ENCODE measurements at regions of chr3 and their contacts with region 1.

Region 1: DNA sequence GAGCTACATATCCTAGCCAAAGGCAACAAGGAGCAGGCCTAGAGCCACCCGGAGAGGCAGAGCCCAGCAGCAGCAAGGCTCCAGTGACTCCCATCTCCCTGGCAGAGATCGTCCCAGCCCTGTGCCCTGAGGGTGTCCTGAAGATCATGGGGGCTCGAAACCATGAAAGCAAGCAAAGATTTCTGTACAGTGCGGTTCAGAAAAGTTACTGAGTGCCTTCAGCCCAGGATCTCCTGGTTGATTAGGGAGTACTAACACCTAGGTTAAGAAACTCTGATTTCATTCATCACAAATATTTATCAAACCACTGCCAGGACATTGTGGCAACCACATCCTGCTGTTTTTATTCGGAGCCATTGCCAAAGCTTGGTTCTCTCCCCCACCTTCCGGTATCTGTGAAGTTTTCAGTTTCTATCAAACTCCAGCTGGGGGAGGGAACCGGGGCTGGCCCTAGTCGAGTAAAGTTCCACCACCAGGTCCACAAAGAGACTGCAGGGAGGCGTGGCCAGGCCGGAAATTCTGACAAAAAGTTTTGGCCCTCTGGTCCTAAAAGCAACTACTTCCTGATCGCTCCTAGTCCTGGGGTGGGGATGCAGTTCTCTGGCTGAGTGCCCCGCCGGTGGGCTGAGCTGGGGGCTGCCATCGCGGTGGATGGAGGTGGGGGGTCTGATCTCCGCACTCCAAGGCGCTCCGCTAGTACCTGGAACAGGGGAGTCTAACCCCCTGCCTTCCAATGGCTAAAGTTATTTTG is 1.2 kb downstream of the RAB43 start:
- H3K4me3 Mint-ChIP-seq: peak overlapping the region; percentile 88
- H3K27ac Mint-ChIP-seq: peak overlapping the region; percentile 91
- H3K4me1 Mint-ChIP-seq: peaks cover 59% of the 10 kb centered on the region
- H3K27me3 Mint-ChIP-seq: peaks cover 1% of the 10 kb centered on the region

Region 2: GRCh38 chr3:129183569-129184395 is 63.4 kb after region 1 on chr3 and contains the start of gene CNBP:
- intact Hi-C with region 1: loop called (anchors 2 kb)
- H3K4me3 Mint-ChIP-seq: peak within 1 kb of the TSS; percentile 92
- H3K27ac Mint-ChIP-seq: peak within 1 kb of the TSS; percentile 99
- H3K4me1 Mint-ChIP-seq: peaks cover 31% of the 10 kb centered on the region
- H3K27me3 Mint-ChIP-seq: no peaks in the 10 kb centered on the region

Region 3: DNA sequence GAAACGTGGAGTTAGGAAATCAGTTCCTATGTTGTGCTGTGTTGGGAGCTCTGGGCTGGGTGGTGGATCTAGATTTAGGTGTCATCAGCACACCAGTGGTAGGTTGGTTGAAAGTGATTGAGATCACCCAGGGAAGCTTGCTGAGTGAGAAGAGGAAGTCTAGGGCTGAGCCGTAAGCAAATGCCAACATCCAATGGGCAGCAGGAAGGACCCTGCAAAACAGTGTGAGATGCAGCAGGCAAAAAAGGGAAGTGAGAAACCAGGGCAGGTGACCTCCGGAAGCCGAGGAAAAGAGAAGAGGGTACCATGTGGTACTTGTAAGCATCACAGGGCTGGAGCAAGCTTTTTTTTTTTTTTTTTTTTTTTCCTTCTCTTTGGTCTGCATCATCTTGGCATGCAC is 113.1 kb after region 1 on chr3:
- intact Hi-C with region 1: loop called (anchors 5 kb)
- H3K4me3 Mint-ChIP-seq: peak overlapping the region; percentile 49
- H3K27ac Mint-ChIP-seq: peak overlapping the region; percentile 100
- H3K4me1 Mint-ChIP-seq: peaks cover 82% of the 10 kb centered on the region
- H3K27me3 Mint-ChIP-seq: no peaks in the 10 kb centered on the region